ENCODE measurements at regions of chr18 and their contacts with region 1.

Region 1: GRCh38 chr18:74063023-74063422 is 84.6 kb downstream of the FBXO15 start:
- DNase-seq: peak; percentile 35
- H3K4me3 Mint-ChIP-seq: no peak overlapping the region
- H3K27ac Mint-ChIP-seq: peak overlapping the region; percentile 72
- H3K4me1 Mint-ChIP-seq: peaks cover 38% of the 10 kb centered on the region
- H3K27me3 Mint-ChIP-seq: no peaks in the 10 kb centered on the region

Region 2: GRCh38 chr18:74081966-74082741 is 19.1 kb after region 1 on chr18:
- CTCF ChIA-PET with region 1: interaction called, 20 read pairs
- POLR2A ChIA-PET with region 1: interaction called, 5 read pairs
- DNase-seq: peak; percentile 75
- H3K4me3 Mint-ChIP-seq: peak overlapping the region; percentile 49
- H3K27ac Mint-ChIP-seq: peak overlapping the region; percentile 90
- H3K4me1 Mint-ChIP-seq: peaks cover 18% of the 10 kb centered on the region
- H3K27me3 Mint-ChIP-seq: no peaks in the 10 kb centered on the region

Measured in activated CD4-positive, alpha-beta T cell treated with anti-CD3 and anti-CD28 coated beads, Interleukin-2, amount 10 ng/mL, durations not matched to agents 7 days and 5 days (primary cell).